CD4-positive, alpha-beta T cell (primary cell): ENCODE measurements at regions of chr2 and their contacts with region 1.

Region 1: GRCh38 chr2:118855451-118856279 is 8.2 kb upstream of the EN1 start:
- DNase-seq: peak; percentile 68 to 88 (median 77)
- ATAC-seq: peak; percentile 94
- H3K4me3 ChIP-seq: peak overlapping the region; percentile 42
- H3K4me3 Mint-ChIP-seq: peak overlapping the region; percentile 77
- H3K27ac ChIP-seq: no peak overlapping the region
- H3K27ac Mint-ChIP-seq: no peak overlapping the region
- H3K4me1 ChIP-seq: peaks cover 46% of the 10 kb centered on the region
- H3K4me1 Mint-ChIP-seq: peaks cover 30% of the 10 kb centered on the region
- H3K27me3 ChIP-seq: peaks cover 96 to 98% of the 10 kb centered on the region in 2 experiments
- H3K27me3 Mint-ChIP-seq: peaks cover 95% of the 10 kb centered on the region
- CTCF ChIP-seq: peak; percentile 95

Region 2: DNA sequence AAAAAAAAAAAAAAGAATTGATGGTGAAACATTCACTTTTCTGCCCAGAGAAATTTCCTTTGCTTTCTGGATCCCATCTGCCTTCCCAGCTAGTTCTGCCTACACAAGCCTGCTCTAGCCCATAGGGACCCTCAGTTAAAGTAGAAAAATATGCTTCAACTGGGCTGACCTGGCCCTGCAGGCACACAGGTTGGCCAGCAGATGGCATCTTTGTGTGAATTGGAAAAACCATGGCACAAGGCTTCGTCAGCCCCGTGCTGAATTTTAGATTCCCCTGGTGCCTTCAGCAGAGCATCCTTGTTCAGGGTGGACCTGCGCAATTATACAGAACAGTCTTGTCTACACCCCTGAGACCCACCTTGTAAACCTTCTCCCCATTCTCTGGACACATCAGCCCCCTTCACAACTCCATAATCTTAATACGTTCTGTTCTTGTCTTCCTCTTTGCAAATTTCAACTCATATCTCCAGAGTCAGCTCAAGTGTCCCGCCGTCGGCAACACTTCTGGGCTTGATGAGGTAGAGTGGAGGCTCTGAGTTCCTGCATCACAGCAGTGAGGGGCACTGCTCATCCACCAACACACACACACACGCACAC is 652.9 kb before region 1 on chr2:
- CTCF ChIA-PET with region 1: no interaction called
- POLR2A ChIA-PET with region 1: no interaction called
- intact Hi-C with region 1: loop called in 1 of 2 experiments (anchors 5 kb)
- DNase-seq: peak; percentile 28 to 72 (median 40)
- ATAC-seq: peak; percentile 98
- H3K4me3 ChIP-seq: no peak overlapping the region
- H3K4me3 Mint-ChIP-seq: peak overlapping the region; percentile 0
- H3K27ac ChIP-seq: no peak overlapping the region
- H3K27ac Mint-ChIP-seq: no peak overlapping the region
- H3K4me1 ChIP-seq: peaks cover 6% of the 10 kb centered on the region
- H3K4me1 Mint-ChIP-seq: peaks cover 5% of the 10 kb centered on the region
- H3K27me3 ChIP-seq: no peaks in the 10 kb centered on the region
- H3K27me3 Mint-ChIP-seq: peaks cover 39% of the 10 kb centered on the region
- CTCF ChIP-seq: peak; percentile 75

Region 3: GRCh38 chr2:118808429-118808809 is 47.2 kb before region 1 on chr2:
- CTCF ChIA-PET with region 1: no interaction called
- POLR2A ChIA-PET with region 1: no interaction called
- intact Hi-C with region 1: no loop called
- DNase-seq: no peak
- ATAC-seq: no peak
- H3K4me3 ChIP-seq: peak overlapping the region; percentile 3
- H3K4me3 Mint-ChIP-seq: no peak overlapping the region
- H3K27ac ChIP-seq: no peak overlapping the region
- H3K27ac Mint-ChIP-seq: no peak overlapping the region
- H3K4me1 ChIP-seq: peaks cover 4% of the 10 kb centered on the region
- H3K4me1 Mint-ChIP-seq: peaks cover 5% of the 10 kb centered on the region
- H3K27me3 ChIP-seq: peaks cover 43 to 60% of the 10 kb centered on the region in 2 experiments
- H3K27me3 Mint-ChIP-seq: peaks cover 86% of the 10 kb centered on the region
- CTCF ChIP-seq: no peak

Region 4: GRCh38 chr2:118822015-118822414 is 33.6 kb before region 1 on chr2:
- CTCF ChIA-PET with region 1: no interaction called
- POLR2A ChIA-PET with region 1: no interaction called
- intact Hi-C with region 1: no loop called
- DNase-seq: no peak
- ATAC-seq: no peak
- H3K4me3 ChIP-seq: no peak overlapping the region
- H3K4me3 Mint-ChIP-seq: no peak overlapping the region
- H3K27ac ChIP-seq: no peak overlapping the region
- H3K27ac Mint-ChIP-seq: no peak overlapping the region
- H3K4me1 ChIP-seq: no peaks in the 10 kb centered on the region
- H3K4me1 Mint-ChIP-seq: no peaks in the 10 kb centered on the region
- H3K27me3 ChIP-seq: peaks cover 26 to 50% of the 10 kb centered on the region in 2 experiments
- H3K27me3 Mint-ChIP-seq: peaks cover 80% of the 10 kb centered on the region
- CTCF ChIP-seq: no peak

Region 5: DNA sequence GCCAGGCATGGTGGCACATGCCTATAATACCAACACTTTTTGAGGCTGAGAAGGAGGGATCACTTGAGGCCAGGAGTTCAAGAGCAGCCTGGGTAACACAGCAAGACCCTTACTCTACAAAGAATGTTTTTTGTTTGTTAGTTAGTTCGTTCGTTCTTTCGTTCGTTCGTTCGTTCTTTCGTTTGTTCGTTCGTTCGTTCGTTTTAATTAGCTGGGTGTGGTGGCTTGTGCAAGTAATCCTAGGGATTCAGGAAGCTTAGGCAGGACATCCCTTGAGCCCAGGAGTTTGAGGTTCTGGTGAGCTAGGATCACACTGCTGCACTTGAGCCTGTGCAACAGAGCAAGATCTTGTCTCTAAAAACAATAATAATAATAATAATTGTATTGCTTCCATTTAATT is 185.1 kb after region 1 on chr2:
- CTCF ChIA-PET with region 1: no interaction called
- POLR2A ChIA-PET with region 1: no interaction called
- intact Hi-C with region 1: no loop called
- DNase-seq: no peak
- ATAC-seq: no peak
- H3K4me3 ChIP-seq: no peak overlapping the region
- H3K4me3 Mint-ChIP-seq: no peak overlapping the region
- H3K27ac ChIP-seq: no peak overlapping the region
- H3K27ac Mint-ChIP-seq: no peak overlapping the region
- H3K4me1 ChIP-seq: no peaks in the 10 kb centered on the region
- H3K4me1 Mint-ChIP-seq: no peaks in the 10 kb centered on the region
- H3K27me3 ChIP-seq: no peaks in the 10 kb centered on the region
- H3K27me3 Mint-ChIP-seq: peaks cover 5% of the 10 kb centered on the region
- CTCF ChIP-seq: no peak